Right lobe of liver (tissue), 6 donors: ENCODE measurements at regions of chr20 and their contacts with region 1.

Region 1: DNA sequence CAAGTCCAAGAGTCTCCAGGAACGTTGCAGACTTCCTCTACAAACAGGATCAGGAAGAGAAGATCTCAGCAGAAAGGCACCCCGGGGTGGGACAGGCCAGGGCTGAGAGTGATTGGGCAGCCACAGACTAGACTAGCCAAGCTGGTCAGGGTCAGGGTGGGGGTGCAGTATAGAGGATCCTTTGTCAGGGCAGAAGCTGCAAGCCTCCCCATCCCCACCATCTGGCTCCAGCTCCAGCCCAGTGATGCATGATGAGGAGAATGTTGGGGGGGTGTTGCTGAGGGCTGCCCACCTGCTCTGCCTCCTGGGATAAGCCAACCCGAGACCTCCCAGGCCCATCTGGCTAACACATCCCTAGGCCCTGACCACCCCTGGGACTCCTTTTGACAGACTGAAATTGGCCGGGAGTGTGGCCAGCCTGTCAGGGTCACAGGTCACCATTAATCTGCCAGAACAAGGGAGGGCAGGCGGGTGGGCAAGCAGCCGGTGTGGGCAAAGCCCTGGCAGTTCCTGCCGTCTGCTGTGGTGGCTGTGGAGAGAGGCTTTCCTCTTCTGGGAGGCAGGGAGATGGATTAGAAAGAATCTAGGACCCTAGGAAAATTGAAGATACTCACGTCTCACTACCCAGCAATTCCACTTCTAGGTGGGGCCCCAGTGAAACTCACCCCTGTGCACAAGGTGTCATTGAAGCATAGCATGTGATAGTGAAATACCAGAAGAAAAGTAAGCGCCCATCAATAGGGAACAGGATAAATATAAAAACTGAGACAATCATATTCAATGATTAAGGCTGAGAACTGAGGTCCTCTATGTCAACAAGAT is 22.1 kb upstream of the SNTA1 start:
- DNase-seq: no peak
- ATAC-seq: no peak
- H3K4me3 ChIP-seq: no peak overlapping the region
- H3K27ac ChIP-seq: no peak overlapping the region
- H3K4me1 ChIP-seq: no peaks in the 10 kb centered on the region
- H3K27me3 ChIP-seq: no peaks in the 10 kb centered on the region
- CTCF ChIP-seq: no peak
- POLR2A ChIP-seq: no peak

Region 2: GRCh38 chr20:33653218-33653899 is 187.7 kb after region 1 on chr20:
- intact Hi-C with region 1: loop called (anchors 5 to 10 kb)
- DNase-seq: no peak
- ATAC-seq: peak; percentile 79 to 88 (median 84)
- H3K4me3 ChIP-seq: no peak overlapping the region
- H3K27ac ChIP-seq: no peak overlapping the region
- H3K4me1 ChIP-seq: peaks cover 0 to 9% (median 0%) of the 10 kb centered on the region in 4 donors
- H3K27me3 ChIP-seq: no peaks in the 10 kb centered on the region
- CTCF ChIP-seq: peak; percentile 69 to 79 (median 78)
- POLR2A ChIP-seq: no peak